Ovary (tissue), 10 donors: ENCODE measurements at regions of chr5 and their contacts with region 1.

Region 1: GRCh38 chr5:179907570-179908324 is at the start of gene TBC1D9B:
- DNase-seq: peak; percentile 74 to 88 (median 83)
- H3K4me3 ChIP-seq: peak within 1 kb of the TSS; percentile 62
- H3K27ac ChIP-seq: peak within 1 kb of the TSS; percentile 60 to 65
- H3K4me1 ChIP-seq: peaks cover 9% of the 10 kb centered on the region
- H3K27me3 ChIP-seq: no peaks in the 10 kb centered on the region
- CTCF ChIP-seq: peak in 2 of 3 donors; percentile 41 to 42
- EP300 ChIP-seq: no peak
- POLR2A ChIP-seq: no peak
- total RNA-seq, gene TBC1D9B: 48.3 to 121 (median 87.8) TPM

Region 2: GRCh38 chr5:179763215-179763945 is 144.4 kb before region 1 on chr5:
- intact Hi-C with region 1: loop called in 1 of 4 experiments (anchors 10 kb)
- DNase-seq: peak; percentile 55 to 81 (median 68)
- H3K4me3 ChIP-seq: no peak overlapping the region
- H3K27ac ChIP-seq: no peak overlapping the region
- H3K4me1 ChIP-seq: peaks cover 2% of the 10 kb centered on the region
- H3K27me3 ChIP-seq: no peaks in the 10 kb centered on the region
- CTCF ChIP-seq: peak; percentile 58 to 88 (median 87)
- EP300 ChIP-seq: no peak
- POLR2A ChIP-seq: no peak

Region 3: GRCh38 chr5:179795863-179796833 is 111.6 kb before region 1 on chr5:
- intact Hi-C with region 1: loop called in 2 of 4 experiments (anchors 10 kb)
- DNase-seq: peak; percentile 74 to 88 (median 82)
- H3K4me3 ChIP-seq: peak overlapping the region; percentile 49
- H3K27ac ChIP-seq: peak overlapping the region; percentile 63 to 68
- H3K4me1 ChIP-seq: peaks cover 15% of the 10 kb centered on the region
- H3K27me3 ChIP-seq: no peaks in the 10 kb centered on the region
- CTCF ChIP-seq: peak; percentile 55 to 87 (median 85)
- EP300 ChIP-seq: no peak
- POLR2A ChIP-seq: no peak

Region 4: GRCh38 chr5:179806250-179807222 is 101.2 kb before region 1 on chr5 and contains the start of gene MGAT4B:
- intact Hi-C with region 1: loop called in 1 of 4 experiments (anchors 10 kb)
- DNase-seq: peak; percentile 72 to 83 (median 76)
- H3K4me3 ChIP-seq: peak within 1 kb of the TSS; percentile 94
- H3K27ac ChIP-seq: peak within 1 kb of the TSS; percentile 92 to 98
- H3K4me1 ChIP-seq: peaks cover 2% of the 10 kb centered on the region
- H3K27me3 ChIP-seq: no peaks in the 10 kb centered on the region
- CTCF ChIP-seq: no peak
- EP300 ChIP-seq: no peak
- POLR2A ChIP-seq: peak; percentile 61
- total RNA-seq, gene MGAT4B: 51.2 to 102 (median 68.6) TPM

Region 5: DNA sequence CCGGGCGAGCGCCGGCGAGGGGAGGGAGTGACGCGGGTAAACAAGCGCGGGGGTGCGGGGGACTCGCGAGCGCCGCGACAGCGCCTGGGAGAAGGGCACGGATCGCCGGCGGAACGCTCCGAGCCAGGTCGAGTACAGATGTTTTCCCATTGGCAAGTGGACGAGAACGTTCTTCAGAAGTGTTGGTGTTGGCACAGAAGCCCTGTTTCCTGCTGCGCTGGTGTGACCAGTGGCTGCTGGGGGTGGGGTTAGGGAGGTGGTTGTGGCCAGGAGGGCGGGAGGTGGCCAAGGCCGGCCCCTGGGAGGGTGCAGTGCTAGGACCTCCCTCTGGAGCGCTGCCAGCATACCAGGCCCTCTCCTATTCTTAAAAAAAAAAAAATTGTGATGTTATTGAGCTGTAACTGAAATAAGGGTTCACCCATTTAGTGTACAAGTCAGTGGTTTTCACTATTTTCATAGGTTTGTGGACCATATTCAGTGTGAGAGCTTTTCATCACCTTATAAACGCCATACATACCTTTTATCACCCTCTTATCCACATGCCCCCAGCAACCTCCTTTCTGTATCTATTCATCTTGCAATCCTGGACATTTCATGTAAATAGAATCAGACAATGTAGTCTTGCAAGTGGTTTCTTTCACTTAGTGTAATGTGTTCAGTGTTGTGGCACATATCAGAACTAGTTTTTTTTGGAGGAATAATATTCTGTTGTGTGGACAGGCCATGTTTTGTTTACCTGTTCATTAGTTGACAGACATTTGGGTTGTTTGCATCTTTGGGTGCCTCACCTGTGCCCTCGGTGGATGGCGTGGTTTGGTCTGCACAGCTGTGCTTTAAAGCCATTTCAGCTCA is 85.9 kb before region 1 on chr5:
- intact Hi-C with region 1: loop called in 1 of 4 experiments (anchors 10 kb)
- DNase-seq: peak; percentile 96 to 98 (median 96)
- H3K4me3 ChIP-seq: peak overlapping the region; percentile 82
- H3K27ac ChIP-seq: peak overlapping the region; percentile 90 to 98
- H3K4me1 ChIP-seq: peaks cover 34% of the 10 kb centered on the region
- H3K27me3 ChIP-seq: no peaks in the 10 kb centered on the region
- CTCF ChIP-seq: no peak
- EP300 ChIP-seq: no peak
- POLR2A ChIP-seq: peak; percentile 76

Region 6: DNA sequence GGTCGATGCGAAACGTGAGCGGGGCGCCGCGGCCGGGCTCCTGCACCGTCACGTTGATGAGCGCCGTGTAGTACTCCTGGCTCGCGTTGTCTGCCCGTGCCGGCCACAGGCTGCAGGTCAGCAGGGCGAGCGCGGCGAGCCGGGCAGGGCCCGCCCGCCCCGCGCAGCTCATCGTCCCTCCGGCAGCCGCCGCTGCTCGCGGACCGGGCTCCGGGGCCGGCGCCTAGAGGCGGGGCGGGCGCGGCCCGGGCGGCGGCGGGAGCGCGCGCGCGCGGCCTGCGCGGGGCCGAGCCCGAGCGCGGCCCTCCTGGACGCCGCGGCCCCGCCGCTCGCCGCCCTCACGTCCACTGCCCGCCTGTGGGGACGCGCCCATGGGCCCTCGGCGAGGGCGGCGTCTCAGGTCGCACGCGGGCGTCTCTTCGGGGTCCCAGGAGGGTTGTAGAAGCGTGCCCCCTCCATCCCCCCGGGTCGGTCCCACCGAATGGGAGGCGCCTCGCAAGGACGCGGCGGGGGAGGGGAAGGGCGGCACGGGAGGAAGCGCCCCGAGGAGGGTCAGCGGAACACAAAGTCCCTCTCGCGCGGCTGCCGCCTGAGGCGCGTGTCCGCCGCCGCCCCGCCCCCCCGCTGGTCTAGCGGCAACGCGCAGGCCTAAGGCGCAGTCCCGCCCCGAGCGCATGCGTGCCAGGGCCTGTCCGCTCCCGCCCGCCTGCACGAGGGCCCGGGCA is 163.9 kb after region 1 on chr5 and contains the start of gene RNF130:
- intact Hi-C with region 1: loop called in 2 of 4 experiments (anchors 10 kb)
- DNase-seq: peak; percentile 92 to 97 (median 95)
- H3K4me3 ChIP-seq: peak within 1 kb of the TSS; percentile 99
- H3K27ac ChIP-seq: peak within 1 kb of the TSS; percentile 87 to 98
- H3K4me1 ChIP-seq: peaks cover 9% of the 10 kb centered on the region
- H3K27me3 ChIP-seq: no peaks in the 10 kb centered on the region
- CTCF ChIP-seq: no peak
- EP300 ChIP-seq: no peak
- POLR2A ChIP-seq: peak; percentile 58
- total RNA-seq, gene RNF130: 54.7 to 75.1 (median 66.7) TPM

Region 7: GRCh38 chr5:180201051-180201987 is 293.6 kb after region 1 on chr5:
- intact Hi-C with region 1: no loop called
- DNase-seq: no peak
- H3K4me3 ChIP-seq: no peak overlapping the region
- H3K27ac ChIP-seq: no peak overlapping the region
- H3K4me1 ChIP-seq: no peaks in the 10 kb centered on the region
- H3K27me3 ChIP-seq: no peaks in the 10 kb centered on the region
- CTCF ChIP-seq: no peak
- EP300 ChIP-seq: no peak
- POLR2A ChIP-seq: no peak